HepG2 (cell line): ENCODE measurements at regions of chr9 and their contacts with region 1.

Region 1: DNA sequence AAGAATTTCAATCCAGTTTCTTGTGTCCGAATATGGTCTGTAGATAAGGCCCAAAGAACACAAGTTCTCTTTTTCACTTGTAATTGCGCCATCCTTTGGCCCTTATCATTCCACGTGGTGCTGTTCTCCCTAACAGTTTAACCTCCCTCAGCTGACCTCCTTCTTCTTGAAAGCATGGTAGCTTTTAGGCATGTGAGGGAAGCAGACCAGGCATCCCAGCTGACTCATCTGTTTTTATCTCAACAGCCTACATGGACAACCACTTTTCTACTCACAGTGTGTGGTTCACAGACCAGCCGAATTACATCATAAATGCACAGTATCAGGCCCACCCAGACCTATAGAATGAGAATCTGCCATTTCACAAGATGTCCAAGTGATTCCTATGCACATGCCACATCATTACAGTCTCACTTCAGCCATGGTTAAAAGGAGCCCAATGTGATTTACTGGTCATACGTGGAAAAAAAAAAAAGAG is 26.9 kb upstream of the PLIN2 start:
- DNase-seq: peak; percentile 92
- ATAC-seq: no peak; the same call in 2 of the 3 replicates
- H3K4me3 ChIP-seq: no peak overlapping the region; a peak in 1 of 6 replicates
- H3K27ac ChIP-seq: peak overlapping the region; percentile 83
- H3K4me1 ChIP-seq: peaks cover 98% of the 10 kb centered on the region
- H3K27me3 ChIP-seq: no peaks in the 10 kb centered on the region
- CTCF ChIP-seq: peak; percentile 34; the same call in 1 of the 2 replicates
- EP300 ChIP-seq: peak in 1 of 2 experiments; percentile 94; a peak in 2 of 4 replicates
- POLR2A ChIP-seq: no peak
- RAD21 ChIP-seq: no peak

Region 2: GRCh38 chr9:19113964-19114679 is 40.1 kb before region 1 on chr9:
- CTCF ChIA-PET with region 1: no interaction called
- POLR2A ChIA-PET with region 1: interaction called, 11 read pairs
- in situ Hi-C with region 1: no loop called
- intact Hi-C with region 1: no loop called
- DNase-seq: no peak
- ATAC-seq: peak; percentile 46
- H3K4me3 ChIP-seq: no peak overlapping the region
- H3K27ac ChIP-seq: peak overlapping the region; percentile 55
- H3K4me1 ChIP-seq: peaks cover 66% of the 10 kb centered on the region
- H3K27me3 ChIP-seq: no peaks in the 10 kb centered on the region
- CTCF ChIP-seq: no peak
- EP300 ChIP-seq: no peak
- POLR2A ChIP-seq: peak; percentile 29 to 31; a peak in 2 of 4 replicates
- RAD21 ChIP-seq: no peak

Region 3: GRCh38 chr9:19127881-19128500 is 26.2 kb before region 1 on chr9:
- CTCF ChIA-PET with region 1: interaction called, 3 read pairs
- POLR2A ChIA-PET with region 1: interaction called, 18 read pairs
- in situ Hi-C with region 1: no loop called
- intact Hi-C with region 1: loop called (anchors 1 kb)
- DNase-seq: no peak
- ATAC-seq: peak; percentile 7
- H3K4me3 ChIP-seq: peak overlapping the region; percentile 73 to 89 (median 81); a peak in 4 of 6 replicates
- H3K27ac ChIP-seq: peak overlapping the region; percentile 92
- H3K4me1 ChIP-seq: peaks cover 81% of the 10 kb centered on the region
- H3K27me3 ChIP-seq: peaks cover 0 to 5% of the 10 kb centered on the region in 2 experiments; a peak in 1 of 5 replicates
- CTCF ChIP-seq: no peak
- EP300 ChIP-seq: no peak
- POLR2A ChIP-seq: no peak
- RAD21 ChIP-seq: no peak

Region 4: DNA sequence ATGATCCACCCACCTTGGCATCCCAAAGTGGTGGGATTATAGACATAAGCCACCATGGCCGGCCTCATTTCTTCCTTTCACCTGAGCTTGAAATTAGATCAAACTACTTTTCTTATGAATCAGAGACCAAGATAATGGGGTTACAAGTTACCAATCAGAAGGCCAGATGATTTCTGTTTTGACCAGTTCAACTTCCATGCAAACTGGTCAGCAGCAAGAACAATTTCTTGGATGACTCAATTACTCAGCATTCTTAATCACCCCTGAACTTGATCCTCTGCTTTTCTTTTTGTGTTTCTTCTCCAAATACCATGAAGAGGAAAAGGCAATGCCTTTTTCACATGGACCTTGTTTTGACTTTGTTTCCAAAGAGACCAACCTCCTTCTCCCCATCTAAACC is 16.9 kb before region 1 on chr9:
- CTCF ChIA-PET with region 1: no interaction called
- POLR2A ChIA-PET with region 1: interaction called, 4 read pairs
- in situ Hi-C with region 1: no loop called
- intact Hi-C with region 1: loop called (anchors 1 kb)
- DNase-seq: no peak
- ATAC-seq: no peak
- H3K4me3 ChIP-seq: no peak overlapping the region
- H3K27ac ChIP-seq: no peak overlapping the region
- H3K4me1 ChIP-seq: peaks cover 53% of the 10 kb centered on the region
- H3K27me3 ChIP-seq: no peaks in the 10 kb centered on the region
- CTCF ChIP-seq: no peak
- EP300 ChIP-seq: no peak
- POLR2A ChIP-seq: no peak
- RAD21 ChIP-seq: no peak